Cardiac septum (tissue), 1 donor: ENCODE measurements at regions of chr7 and their contacts with region 1.

Region 1: DNA sequence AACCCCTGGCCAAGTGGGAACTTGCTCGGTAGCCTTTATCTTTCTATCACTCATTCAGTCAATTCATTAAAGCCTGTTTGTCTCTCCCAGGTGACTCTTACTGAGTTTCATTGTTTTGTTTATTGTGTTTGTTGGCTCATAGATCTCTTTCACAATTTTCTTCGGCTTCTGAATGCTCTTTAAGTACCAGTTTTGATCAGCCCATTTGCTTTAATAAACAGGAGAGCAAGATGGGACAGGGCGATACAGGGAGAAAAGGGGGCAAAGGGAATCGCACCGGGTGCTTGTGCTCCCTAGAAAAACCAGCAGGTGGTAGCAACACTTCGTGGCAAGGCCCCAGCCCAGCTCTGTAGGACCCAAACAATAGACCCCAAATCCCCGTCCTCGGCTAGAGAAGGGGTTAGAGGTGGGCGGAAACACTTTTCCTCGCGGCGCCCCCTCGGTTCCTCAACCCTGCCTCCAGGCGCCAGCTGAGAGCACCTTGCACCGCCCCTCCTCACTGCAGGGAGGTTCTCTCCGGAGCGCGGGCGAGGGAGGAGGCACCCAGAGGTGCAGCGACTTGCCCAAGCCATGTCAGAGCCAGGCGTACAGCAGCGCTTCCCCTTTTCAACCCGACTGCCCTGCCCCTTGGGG is 1.0 kb upstream of the EPHB6 start:
- DNase-seq: peak; percentile 91

Region 2: GRCh38 chr7:142811154-142811737 is 42.6 kb before region 1 on chr7:
- intact Hi-C with region 1: no loop called
- DNase-seq: no peak

Region 3: DNA sequence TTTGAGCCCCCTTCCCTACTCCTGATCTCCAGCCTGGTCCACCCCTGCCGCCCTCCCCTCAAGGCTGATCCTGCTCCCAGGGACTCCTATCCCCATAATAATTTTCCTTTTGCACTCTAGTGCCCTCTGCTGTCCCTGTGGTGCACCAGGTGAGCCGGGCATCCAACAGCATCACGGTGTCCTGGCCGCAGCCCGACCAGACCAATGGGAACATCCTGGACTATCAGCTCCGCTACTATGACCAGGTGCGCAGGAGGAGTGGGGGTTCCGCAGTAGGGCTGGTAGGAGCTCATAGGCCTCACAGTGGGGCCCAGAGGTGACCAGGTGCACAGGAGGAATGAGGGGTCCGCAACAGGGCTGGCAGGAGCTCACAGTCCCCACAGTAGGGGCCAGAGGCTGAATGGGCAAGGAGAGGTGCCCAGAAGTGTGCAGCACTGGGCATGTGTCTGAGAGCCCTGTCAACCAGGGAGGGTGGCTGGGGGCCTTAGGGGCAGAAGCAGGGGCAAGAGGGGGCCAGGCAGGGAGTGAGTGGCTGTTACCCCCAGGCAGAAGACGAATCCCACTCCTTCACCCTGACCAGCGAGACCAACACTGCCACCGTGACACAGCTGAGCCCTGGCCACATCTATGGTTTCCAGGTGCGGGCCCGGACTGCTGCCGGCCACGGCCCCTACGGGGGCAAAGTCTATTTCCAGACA is 12.7 kb after region 1 on chr7:
- intact Hi-C with region 1: loop called (anchors 1 kb)
- DNase-seq: peak; percentile 66

Region 4: DNA sequence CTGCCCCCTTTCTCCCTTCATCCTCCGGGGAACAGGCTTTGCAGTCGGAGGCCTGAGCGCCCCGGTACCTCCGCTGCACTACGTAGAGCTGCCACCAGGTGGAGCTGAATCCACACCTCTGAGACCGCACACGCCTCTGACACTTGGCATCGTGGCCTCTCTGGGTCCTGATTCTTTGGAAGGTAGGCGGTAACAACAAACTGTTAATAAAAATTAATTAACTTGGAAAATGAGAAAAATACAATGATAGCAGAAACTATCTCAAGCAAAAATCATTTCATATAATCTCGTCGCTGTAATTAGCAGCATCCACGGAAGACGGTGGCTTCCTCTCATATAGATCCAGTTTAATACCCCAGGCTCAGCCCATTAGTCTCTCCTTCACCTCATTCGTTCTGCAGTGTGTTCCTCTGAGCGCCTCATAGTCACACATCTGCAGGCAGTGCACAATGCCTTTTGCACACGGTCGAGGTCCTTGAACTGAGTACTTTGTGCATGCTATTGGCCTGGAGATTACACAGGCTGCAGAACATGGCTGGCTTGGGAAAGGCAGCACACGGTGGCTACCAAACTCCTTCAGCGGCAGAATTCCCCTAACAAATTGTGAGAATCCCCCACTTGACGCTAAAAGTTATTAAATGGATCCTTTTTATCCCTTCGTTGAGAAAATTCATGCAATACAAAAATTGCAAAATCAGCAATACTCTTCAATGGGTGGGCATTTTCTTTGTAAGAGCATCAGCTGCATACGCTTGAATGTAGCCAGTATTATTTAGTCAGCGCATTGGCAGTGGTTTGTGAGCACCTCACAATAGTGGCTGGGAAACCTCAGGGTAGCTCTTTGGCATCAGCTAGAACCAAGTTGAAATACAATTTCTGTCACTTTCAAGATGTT is 154.4 kb after region 1 on chr7:
- intact Hi-C with region 1: loop called (anchors 1 kb)
- DNase-seq: peak; percentile 88

Region 5: GRCh38 chr7:143214789-143215679 is 361.2 kb after region 1 on chr7:
- intact Hi-C with region 1: loop called (anchors 5 kb)
- DNase-seq: no peak